ENCODE measurements at regions of chr14 and their contacts with region 1.

Region 1: DNA sequence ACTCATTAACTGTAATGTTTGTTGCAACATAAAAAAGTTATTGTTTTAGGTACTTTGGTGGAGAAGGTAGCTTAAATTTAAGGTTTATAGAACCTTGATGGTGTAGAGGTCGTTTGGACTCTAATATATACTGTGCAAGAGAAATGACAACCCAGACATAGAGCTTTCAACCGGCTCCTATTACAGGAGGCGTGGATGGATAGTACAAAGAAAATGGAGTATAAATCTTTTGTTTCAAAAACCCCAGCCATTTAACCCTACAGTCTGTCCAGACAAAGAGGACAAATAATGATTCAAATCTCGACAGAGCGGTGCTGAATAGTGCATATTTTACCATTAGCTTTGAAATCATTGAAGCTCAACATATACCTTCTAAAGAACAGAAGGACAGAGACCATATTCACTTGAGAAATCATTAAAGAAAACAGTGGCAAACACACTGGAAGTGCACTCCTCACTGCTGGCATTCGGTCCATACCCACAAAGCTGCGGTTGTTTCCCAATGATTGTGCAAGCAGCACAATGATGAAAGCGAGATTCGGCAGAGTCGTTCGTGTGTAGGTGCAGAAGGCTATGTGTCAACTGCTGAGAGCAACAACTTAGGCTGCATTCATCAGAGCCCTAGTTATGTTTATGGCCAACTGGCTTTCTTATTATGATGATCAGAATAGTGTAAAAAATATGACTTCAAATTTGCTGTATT is 688.6 kb downstream of the NOVA1 start:
- DNase-seq: no peak
- H3K4me3 ChIP-seq: no peak overlapping the region
- H3K27ac ChIP-seq: no peak overlapping the region
- H3K4me1 ChIP-seq: peaks cover 0 to 4% (median 0%) of the 10 kb centered on the region in 4 donors
- H3K27me3 ChIP-seq: no peaks in the 10 kb centered on the region
- CTCF ChIP-seq: no peak
- EP300 ChIP-seq: no peak
- POLR2A ChIP-seq: no peak

Region 2: DNA sequence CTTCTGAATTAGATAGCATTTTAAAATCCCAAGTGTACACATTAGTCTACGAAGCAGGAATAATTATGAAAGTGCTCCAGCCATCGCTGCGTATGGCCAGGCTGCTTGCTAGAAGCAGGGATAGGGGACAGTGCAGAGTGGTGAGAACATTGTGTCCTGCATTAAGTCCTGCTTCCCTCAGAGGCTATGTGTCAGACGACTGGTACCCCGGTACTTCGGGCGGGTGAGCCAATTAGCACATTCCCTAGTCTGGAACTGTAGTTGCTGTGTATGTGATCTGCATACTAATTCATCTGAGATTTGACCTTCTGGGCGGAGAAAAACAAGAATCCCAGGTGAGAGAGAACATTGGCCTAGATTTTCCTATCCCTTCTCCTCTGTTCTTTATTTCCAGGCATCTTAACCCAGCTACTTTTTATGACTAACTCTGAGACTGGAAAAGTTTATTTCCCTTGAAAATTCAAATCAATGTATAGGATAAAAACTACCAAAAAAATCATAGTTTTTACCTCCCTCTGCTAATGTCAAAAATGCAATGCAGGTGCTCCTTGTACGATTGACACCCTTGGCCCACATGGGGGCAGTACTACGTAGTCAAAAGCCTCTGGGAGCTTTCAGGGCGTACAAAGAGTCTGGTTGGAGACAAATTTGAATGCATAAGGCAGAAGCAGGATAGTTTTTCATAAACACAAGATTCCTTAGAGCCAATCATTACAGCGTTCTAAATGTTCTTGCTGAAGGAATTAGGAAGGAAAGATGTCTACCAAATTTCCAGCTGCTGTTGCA is 75.7 kb before region 1 on chr14:
- in situ Hi-C with region 1: no loop called
- intact Hi-C with region 1: no loop called
- DNase-seq: peak; percentile 11
- H3K4me3 ChIP-seq: no peak overlapping the region
- H3K27ac ChIP-seq: no peak overlapping the region
- H3K4me1 ChIP-seq: no peaks in the 10 kb centered on the region
- H3K27me3 ChIP-seq: no peaks in the 10 kb centered on the region
- CTCF ChIP-seq: peak; percentile 19 to 46 (median 36)
- EP300 ChIP-seq: no peak
- POLR2A ChIP-seq: no peak

Region 3: GRCh38 chr14:25896777-25897176 is 12.4 kb before region 1 on chr14:
- in situ Hi-C with region 1: no loop called
- intact Hi-C with region 1: loop called (anchors 1 kb)
- DNase-seq: no peak
- H3K4me3 ChIP-seq: no peak overlapping the region
- H3K27ac ChIP-seq: no peak overlapping the region
- H3K4me1 ChIP-seq: no peaks in the 10 kb centered on the region
- H3K27me3 ChIP-seq: no peaks in the 10 kb centered on the region
- CTCF ChIP-seq: no peak
- EP300 ChIP-seq: no peak
- POLR2A ChIP-seq: no peak

Region 4: GRCh38 chr14:25955772-25956171 is 46.6 kb after region 1 on chr14:
- in situ Hi-C with region 1: no loop called
- intact Hi-C with region 1: no loop called
- DNase-seq: no peak
- H3K4me3 ChIP-seq: no peak overlapping the region
- H3K27ac ChIP-seq: no peak overlapping the region
- H3K4me1 ChIP-seq: no peaks in the 10 kb centered on the region
- H3K27me3 ChIP-seq: no peaks in the 10 kb centered on the region
- CTCF ChIP-seq: no peak
- EP300 ChIP-seq: no peak
- POLR2A ChIP-seq: no peak